ENCODE measurements at regions of chr5 and their contacts with region 1.

Region 1: DNA sequence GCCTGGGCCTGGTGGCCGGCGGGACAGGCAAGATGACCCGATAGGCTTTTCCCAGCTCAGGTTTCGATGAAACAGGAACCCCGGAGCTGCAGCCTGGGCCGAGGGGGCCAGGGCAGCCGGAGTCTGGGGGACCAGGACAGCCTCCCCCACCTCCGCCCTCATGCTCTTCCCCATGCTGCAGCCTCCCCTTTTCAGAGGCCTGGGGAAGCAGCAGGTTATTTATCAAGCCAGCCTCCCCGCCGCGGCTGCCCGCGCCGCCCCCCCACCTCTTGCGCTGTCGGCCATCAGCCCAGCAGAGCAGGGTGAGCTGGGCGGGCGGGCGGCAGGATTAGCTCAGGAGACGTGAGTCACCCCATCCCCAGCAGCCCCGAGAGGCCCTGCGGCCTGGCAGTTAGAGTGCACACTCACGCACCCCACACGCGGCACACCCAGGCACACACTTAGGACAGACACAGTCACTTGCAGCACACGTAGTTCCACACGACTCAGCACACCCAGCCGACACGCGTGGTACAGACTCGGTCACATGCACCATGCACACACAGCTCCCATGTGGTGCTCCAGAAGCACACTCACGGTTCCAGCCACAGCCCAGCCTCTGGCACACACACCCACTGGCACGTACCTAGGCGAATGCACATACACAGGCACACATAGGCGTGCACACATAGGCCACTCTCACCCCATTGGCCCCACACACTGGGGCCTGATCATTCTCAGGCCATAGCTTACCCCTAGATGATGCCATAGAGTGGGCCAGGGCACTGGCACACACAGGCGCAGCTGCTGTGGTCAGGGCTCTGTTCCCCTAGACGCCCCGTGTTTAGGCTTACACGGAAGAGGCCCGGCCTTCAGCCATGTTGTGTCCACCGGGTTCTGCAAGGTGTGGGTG is 13.0 kb downstream of the CXXC5 start:
- DNase-seq: peak; percentile 60
- CTCF ChIP-seq: no peak

Region 2: DNA sequence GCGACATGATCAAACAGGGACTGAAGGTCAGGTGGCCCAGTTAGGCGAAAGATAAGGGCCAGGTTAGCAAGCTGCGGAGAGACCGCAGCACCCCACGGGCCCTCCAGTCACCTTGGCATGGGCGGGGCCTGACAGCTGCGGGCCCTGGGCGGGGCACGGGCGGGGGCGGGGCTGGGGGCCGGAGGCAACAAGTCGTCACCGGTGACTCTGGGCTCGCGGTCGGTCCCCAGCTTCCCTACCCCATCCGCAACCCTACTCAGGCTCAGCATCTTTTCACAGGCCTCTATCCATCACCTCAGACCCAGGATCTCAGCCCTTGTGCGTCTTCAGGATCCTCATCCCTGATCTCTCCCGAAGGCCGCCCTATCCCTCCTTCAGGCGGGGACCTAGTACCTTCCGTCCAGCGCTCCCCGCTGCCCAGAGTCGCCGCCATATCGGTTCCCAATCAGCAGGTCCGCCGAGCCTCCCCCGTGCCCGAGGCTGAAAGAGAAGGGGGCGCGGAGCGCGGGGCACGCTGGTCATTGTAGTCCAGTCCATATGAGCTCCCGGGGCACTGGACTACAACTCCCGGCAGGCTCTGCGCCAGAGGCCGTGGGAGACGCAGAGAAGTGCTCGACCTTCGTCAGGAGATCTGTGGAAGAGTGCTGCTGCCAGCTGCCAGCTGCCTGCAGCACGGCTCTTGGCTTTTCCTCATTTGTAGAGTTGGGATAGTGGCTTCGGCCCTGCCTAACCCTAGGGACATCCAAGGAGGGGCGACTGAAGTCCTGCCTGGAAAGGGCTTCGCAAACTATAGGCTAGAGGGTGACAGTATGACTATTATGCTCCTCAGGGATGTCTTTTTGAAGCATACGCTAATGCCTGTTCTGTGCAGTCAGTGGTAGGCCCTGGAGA is 221.9 kb before region 1 on chr5 and contains the start of gene DNAJC18:
- CTCF ChIA-PET with region 1: no interaction called
- POLR2A ChIA-PET with region 1: interaction called, 11 read pairs
- DNase-seq: peak; percentile 94
- CTCF ChIP-seq: no peak

Region 3: GRCh38 chr5:139482050-139482889 is 178.9 kb before region 1 on chr5 and contains the start of gene STING1:
- CTCF ChIA-PET with region 1: no interaction called
- POLR2A ChIA-PET with region 1: interaction called, 10 read pairs
- DNase-seq: peak; percentile 66
- CTCF ChIP-seq: no peak

Measured in GM10248 (cell line).